ENCODE measurements at regions of chr9 and their contacts with region 1.

Region 1: DNA sequence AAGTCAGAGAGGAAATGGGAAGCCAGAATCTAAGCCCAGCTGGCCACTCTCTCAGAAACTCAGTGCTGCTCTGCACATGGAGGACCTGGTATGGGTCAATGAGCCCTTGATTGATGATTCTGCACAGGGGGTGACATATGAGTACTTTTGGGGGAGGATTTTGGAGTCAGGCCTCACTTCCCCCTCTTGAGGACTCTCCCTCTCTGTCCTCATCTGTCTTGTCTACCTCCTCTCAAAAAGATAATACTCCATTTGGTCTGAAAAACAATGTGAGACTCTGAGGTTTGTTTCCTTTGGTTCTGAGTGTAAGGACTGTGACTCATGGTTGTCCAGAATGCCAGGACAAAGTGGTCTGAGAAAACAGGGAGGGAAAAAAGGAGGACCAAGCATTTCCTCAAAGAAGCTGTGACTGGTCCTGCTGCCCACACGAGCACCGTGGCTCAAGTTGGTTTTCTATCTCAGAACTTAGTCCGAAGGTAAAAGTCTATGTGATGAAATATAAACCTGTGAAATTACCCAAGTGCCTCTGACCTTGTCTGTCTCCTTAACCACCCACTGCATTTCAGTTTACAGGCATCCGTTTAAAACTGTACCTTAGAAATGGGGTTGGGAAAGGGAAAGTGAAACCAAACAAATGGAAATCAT is 11.1 kb downstream of the TTC39B start:
- DNase-seq: peak; percentile 26
- ATAC-seq: peak; percentile 80
- H3K4me3 ChIP-seq: peak overlapping the region; percentile 51; the same call in 1 of the 2 replicates
- H3K27ac ChIP-seq: peak overlapping the region; percentile 57
- H3K4me1 ChIP-seq: peaks cover 21% of the 10 kb centered on the region
- H3K27me3 ChIP-seq: no peaks in the 10 kb centered on the region
- CTCF ChIP-seq: no peak
- EP300 ChIP-seq: no peak
- POLR2A ChIP-seq: no peak
- RAD21 ChIP-seq: no peak

Region 2: GRCh38 chr9:15306757-15307534 is 11.1 kb after region 1 on chr9 and contains the start of gene TTC39B:
- CTCF ChIA-PET with region 1: interaction called, 4 read pairs
- POLR2A ChIA-PET with region 1: interaction called, 3 read pairs
- RAD21 ChIA-PET with region 1: no interaction called
- SMC1A ChIA-PET with region 1: interaction called, 21 read pairs
- in situ Hi-C with region 1: no loop called
- intact Hi-C with region 1: no loop called
- DNase-seq: no peak
- ATAC-seq: peak; percentile 96
- H3K4me3 ChIP-seq: peak within 1 kb of the TSS; percentile 84
- H3K27ac ChIP-seq: no peak within 1 kb of the TSS
- H3K4me1 ChIP-seq: peaks cover 8% of the 10 kb centered on the region; the same call in 1 of the 2 replicates
- H3K27me3 ChIP-seq: no peaks in the 10 kb centered on the region; a peak in 1 of 4 replicates
- CTCF ChIP-seq: no peak
- EP300 ChIP-seq: no peak
- POLR2A ChIP-seq: no peak
- RAD21 ChIP-seq: no peak
- polyA plus RNA-seq, gene TTC39B: 1.0 to 1.4 TPM

Region 3: GRCh38 chr9:15344191-15344590 is 48.3 kb after region 1 on chr9:
- CTCF ChIA-PET with region 1: no interaction called
- POLR2A ChIA-PET with region 1: no interaction called
- RAD21 ChIA-PET with region 1: no interaction called
- SMC1A ChIA-PET with region 1: no interaction called
- in situ Hi-C with region 1: no loop called
- intact Hi-C with region 1: no loop called
- DNase-seq: no peak
- ATAC-seq: no peak
- H3K4me3 ChIP-seq: no peak overlapping the region
- H3K27ac ChIP-seq: no peak overlapping the region
- H3K4me1 ChIP-seq: no peaks in the 10 kb centered on the region
- H3K27me3 ChIP-seq: no peaks in the 10 kb centered on the region
- CTCF ChIP-seq: no peak
- EP300 ChIP-seq: no peak
- POLR2A ChIP-seq: no peak
- RAD21 ChIP-seq: no peak

Region 4: GRCh38 chr9:15357050-15357653 is 61.3 kb after region 1 on chr9:
- CTCF ChIA-PET with region 1: no interaction called
- POLR2A ChIA-PET with region 1: no interaction called
- RAD21 ChIA-PET with region 1: no interaction called
- SMC1A ChIA-PET with region 1: no interaction called
- in situ Hi-C with region 1: no loop called
- intact Hi-C with region 1: no loop called
- DNase-seq: no peak
- ATAC-seq: peak; percentile 94
- H3K4me3 ChIP-seq: no peak overlapping the region
- H3K27ac ChIP-seq: no peak overlapping the region
- H3K4me1 ChIP-seq: no peaks in the 10 kb centered on the region
- H3K27me3 ChIP-seq: no peaks in the 10 kb centered on the region
- CTCF ChIP-seq: peak; percentile 21 to 29 (median 28); a peak in 4 of 6 replicates
- EP300 ChIP-seq: no peak
- POLR2A ChIP-seq: no peak
- RAD21 ChIP-seq: peak; percentile 25; the same call in 1 of the 2 replicates

Region 5: DNA sequence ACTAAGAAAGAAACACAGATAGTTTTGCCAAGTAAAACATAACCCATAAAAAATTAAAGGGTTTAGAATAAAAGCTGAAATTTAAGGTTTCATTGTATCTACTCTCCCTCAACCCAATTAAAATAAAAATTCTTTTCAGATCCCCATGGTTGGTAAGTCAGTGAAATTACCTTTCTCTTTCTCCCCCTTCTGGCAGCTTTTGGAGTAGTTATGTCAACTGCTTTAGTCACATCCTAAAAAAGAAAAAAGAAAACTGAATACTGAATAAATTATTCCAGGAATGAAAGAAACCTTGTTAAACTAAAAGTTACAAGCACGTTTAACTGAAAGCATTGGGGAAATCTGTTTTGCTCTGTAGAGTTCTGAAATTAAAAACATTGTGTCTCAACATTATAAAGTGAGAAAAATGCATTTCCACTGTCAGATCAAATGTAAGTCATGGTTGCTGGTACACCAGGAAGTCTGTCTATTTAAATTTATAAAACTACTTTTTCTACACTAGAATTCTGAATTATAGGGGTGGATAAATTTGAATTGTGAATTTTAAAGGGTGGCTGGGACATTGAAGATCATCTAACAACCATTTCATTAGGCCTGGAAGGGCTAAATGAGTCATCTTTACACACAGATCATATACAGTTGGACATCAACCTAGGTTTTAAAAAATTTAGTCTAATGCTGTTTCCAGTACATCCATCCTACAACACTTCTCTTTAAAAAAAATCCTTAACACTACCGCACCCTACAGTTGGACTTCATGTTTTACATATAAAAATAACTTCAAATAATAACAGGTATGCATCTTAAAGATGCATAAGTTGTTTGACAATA is 190.2 kb after region 1 on chr9:
- CTCF ChIA-PET with region 1: no interaction called
- POLR2A ChIA-PET with region 1: no interaction called
- RAD21 ChIA-PET with region 1: no interaction called
- SMC1A ChIA-PET with region 1: no interaction called
- in situ Hi-C with region 1: no loop called
- intact Hi-C with region 1: no loop called
- DNase-seq: no peak
- ATAC-seq: peak; percentile 58
- H3K4me3 ChIP-seq: no peak overlapping the region
- H3K27ac ChIP-seq: no peak overlapping the region
- H3K4me1 ChIP-seq: no peaks in the 10 kb centered on the region
- H3K27me3 ChIP-seq: no peaks in the 10 kb centered on the region
- CTCF ChIP-seq: peak; percentile 31 to 46 (median 36); a peak in 5 of 6 replicates
- EP300 ChIP-seq: no peak
- POLR2A ChIP-seq: no peak
- RAD21 ChIP-seq: 0 out of 2 replicates have a peak, but pooled peaks have one; percentile 26

Region 6: GRCh38 chr9:15735083-15735974 is 439.4 kb after region 1 on chr9:
- CTCF ChIA-PET with region 1: no interaction called
- POLR2A ChIA-PET with region 1: no interaction called
- RAD21 ChIA-PET with region 1: no interaction called
- SMC1A ChIA-PET with region 1: no interaction called
- in situ Hi-C with region 1: no loop called
- intact Hi-C with region 1: no loop called
- DNase-seq: no peak
- ATAC-seq: no peak
- H3K4me3 ChIP-seq: no peak overlapping the region
- H3K27ac ChIP-seq: no peak overlapping the region
- H3K4me1 ChIP-seq: no peaks in the 10 kb centered on the region
- H3K27me3 ChIP-seq: no peaks in the 10 kb centered on the region
- CTCF ChIP-seq: no peak
- EP300 ChIP-seq: no peak
- POLR2A ChIP-seq: no peak
- RAD21 ChIP-seq: no peak